GM12878 (cell line): ENCODE measurements at regions of chr1 and their contacts with region 1.

Region 1: GRCh38 chr1:160428655-160429054 is 28.3 kb downstream of the VANGL2 start:
- DNase-seq: peak; percentile 81
- ATAC-seq: peak; percentile 54
- H3K4me3 ChIP-seq: no peak overlapping the region
- H3K27ac ChIP-seq: peak overlapping the region; percentile 100
- H3K4me1 ChIP-seq: peaks cover 52% of the 10 kb centered on the region
- H3K27me3 ChIP-seq: no peaks in the 10 kb centered on the region
- CTCF ChIP-seq: peak; percentile 58 to 90 (median 58); a peak in 5 of 6 replicates
- EP300 ChIP-seq: no peak
- POLR2A ChIP-seq: no peak
- RAD21 ChIP-seq: peak; percentile 98

Region 2: DNA sequence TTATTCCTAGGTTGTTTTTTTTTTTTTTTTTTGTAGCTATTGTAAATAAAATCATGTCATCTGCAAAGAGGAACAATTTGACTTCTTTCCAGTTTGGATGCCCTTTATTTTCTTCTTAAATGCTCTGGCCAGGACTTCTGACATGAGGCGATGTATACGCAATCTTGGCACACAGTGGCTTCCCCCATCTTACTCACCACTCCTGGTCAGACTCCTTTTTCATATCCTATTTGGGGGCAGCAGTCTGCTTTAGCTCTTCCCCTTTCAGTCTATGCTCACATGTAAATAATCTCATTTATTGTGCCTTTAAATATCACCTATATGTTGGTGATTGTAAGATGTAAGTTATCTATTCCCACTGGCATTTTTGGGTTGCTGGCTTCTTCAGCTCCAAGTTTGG is 38.3 kb after region 1 on chr1:
- CTCF ChIA-PET with region 1: interaction called, 3 read pairs
- POLR2A ChIA-PET with region 1: interaction called, 10 read pairs
- RAD21 ChIA-PET with region 1: interaction called, 8 read pairs
- SMC1A ChIA-PET with region 1: interaction called, 10 read pairs
- in situ Hi-C with region 1: no loop called
- intact Hi-C with region 1: loop called (anchors 5 kb)
- DNase-seq: no peak
- ATAC-seq: peak; percentile 73
- H3K4me3 ChIP-seq: no peak overlapping the region
- H3K27ac ChIP-seq: no peak overlapping the region; the same call in 1 of the 2 replicates
- H3K4me1 ChIP-seq: peaks cover 41% of the 10 kb centered on the region
- H3K27me3 ChIP-seq: no peaks in the 10 kb centered on the region
- CTCF ChIP-seq: no peak
- EP300 ChIP-seq: no peak
- POLR2A ChIP-seq: no peak
- RAD21 ChIP-seq: no peak

Region 3: DNA sequence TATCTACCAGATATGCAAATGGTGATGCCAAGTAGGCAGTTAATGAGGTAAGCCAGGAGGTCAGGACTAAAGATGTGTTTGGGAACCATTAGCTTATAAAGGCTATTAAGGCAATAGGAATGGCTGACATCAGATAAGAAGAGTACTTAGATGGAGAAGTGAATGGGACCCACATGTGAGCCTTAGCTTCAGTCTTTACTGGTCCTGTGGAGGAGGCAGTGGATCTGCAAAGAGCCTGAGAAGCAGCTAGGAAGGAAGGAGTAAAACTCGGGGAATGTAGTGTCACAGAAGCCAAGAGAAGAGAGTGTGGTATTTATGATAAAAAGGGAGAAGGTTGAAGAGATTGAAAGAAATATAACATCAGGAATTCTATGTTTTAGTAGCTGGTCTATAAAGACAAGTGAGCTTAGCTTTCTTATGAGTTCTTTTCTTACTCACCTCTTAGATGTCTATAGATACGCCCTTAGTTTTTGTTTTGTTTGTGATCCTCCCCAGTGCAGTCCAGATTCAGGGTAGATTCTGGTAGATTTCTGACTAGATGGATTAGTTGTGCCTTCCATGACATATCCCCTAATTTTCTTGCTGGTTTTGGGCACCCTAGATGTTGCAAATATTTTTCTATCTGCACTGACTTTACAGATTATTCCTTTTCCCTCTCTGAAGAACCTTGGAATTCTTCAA is 55.0 kb after region 1 on chr1:
- CTCF ChIA-PET with region 1: interaction called, 10 read pairs
- POLR2A ChIA-PET with region 1: no interaction called
- RAD21 ChIA-PET with region 1: interaction called, 25 read pairs
- SMC1A ChIA-PET with region 1: interaction called, 20 read pairs
- in situ Hi-C with region 1: no loop called
- intact Hi-C with region 1: no loop called
- DNase-seq: no peak
- ATAC-seq: peak; percentile 30; the same call in 2 of the 3 replicates
- H3K4me3 ChIP-seq: no peak overlapping the region
- H3K27ac ChIP-seq: no peak overlapping the region
- H3K4me1 ChIP-seq: peaks cover 5% of the 10 kb centered on the region; the same call in 1 of the 2 replicates
- H3K27me3 ChIP-seq: no peaks in the 10 kb centered on the region
- CTCF ChIP-seq: no peak
- EP300 ChIP-seq: no peak
- POLR2A ChIP-seq: no peak
- RAD21 ChIP-seq: no peak

Region 4: GRCh38 chr1:160519642-160520435 is 91.2 kb after region 1 on chr1:
- CTCF ChIA-PET with region 1: interaction called, 25 read pairs
- POLR2A ChIA-PET with region 1: interaction called, 12 read pairs
- RAD21 ChIA-PET with region 1: interaction called, 13 read pairs
- SMC1A ChIA-PET with region 1: interaction called, 32 read pairs
- in situ Hi-C with region 1: no loop called
- intact Hi-C with region 1: loop called (anchors 2 kb)
- DNase-seq: peak; percentile 64
- ATAC-seq: peak; percentile 70
- H3K4me3 ChIP-seq: peak overlapping the region; percentile 77
- H3K27ac ChIP-seq: peak overlapping the region; percentile 85
- H3K4me1 ChIP-seq: no peaks in the 10 kb centered on the region
- H3K27me3 ChIP-seq: no peaks in the 10 kb centered on the region
- CTCF ChIP-seq: peak in 2 of 3 experiments; percentile 25 to 27; a peak in 2 of 6 replicates
- EP300 ChIP-seq: no peak
- POLR2A ChIP-seq: no peak
- RAD21 ChIP-seq: peak; percentile 16; the same call in 1 of the 2 replicates

Region 5: GRCh38 chr1:160575112-160575664 is 146.5 kb after region 1 on chr1:
- CTCF ChIA-PET with region 1: interaction called, 6 read pairs
- POLR2A ChIA-PET with region 1: interaction called, 20 read pairs
- RAD21 ChIA-PET with region 1: interaction called, 28 read pairs
- SMC1A ChIA-PET with region 1: interaction called, 27 read pairs
- in situ Hi-C with region 1: no loop called
- intact Hi-C with region 1: no loop called
- DNase-seq: no peak
- ATAC-seq: peak; percentile 49
- H3K4me3 ChIP-seq: no peak overlapping the region
- H3K27ac ChIP-seq: peak overlapping the region; percentile 97
- H3K4me1 ChIP-seq: peaks cover 27% of the 10 kb centered on the region
- H3K27me3 ChIP-seq: no peaks in the 10 kb centered on the region
- CTCF ChIP-seq: no peak
- EP300 ChIP-seq: no peak
- POLR2A ChIP-seq: no peak
- RAD21 ChIP-seq: no peak